Heart left ventricle (tissue), 16 donors: ENCODE measurements at regions of chr13 and their contacts with region 1.

Region 1: GRCh38 chr13:50421473-50422130 is 406.4 kb downstream of the KCNRG start:
- DNase-seq: no peak
- ATAC-seq: peak in 1 of 4 donors; percentile 26
- H3K4me3 ChIP-seq: no peak overlapping the region
- H3K27ac ChIP-seq: peak overlapping the region in 9 of 12 donors; percentile 13 to 77 (median 47)
- H3K4me1 ChIP-seq: peaks cover 0 to 60% (median 46%) of the 10 kb centered on the region in 12 donors
- H3K27me3 ChIP-seq: no peaks in the 10 kb centered on the region
- CTCF ChIP-seq: no peak
- POLR2A ChIP-seq: no peak

Region 2: GRCh38 chr13:50387051-50387581 is 34.5 kb before region 1 on chr13:
- intact Hi-C with region 1: loop called in 1 of 10 experiments (anchors 5 kb)
- DNase-seq: peak; percentile 61 to 77 (median 68)
- ATAC-seq: peak; percentile 89 to 96 (median 95)
- H3K4me3 ChIP-seq: peak overlapping the region in 10 of 12 donors; percentile 10 to 50 (median 37)
- H3K27ac ChIP-seq: peak overlapping the region in 11 of 12 donors; percentile 33 to 86 (median 69)
- H3K4me1 ChIP-seq: peaks cover 0 to 20% (median 2%) of the 10 kb centered on the region in 12 donors
- H3K27me3 ChIP-seq: no peaks in the 10 kb centered on the region
- CTCF ChIP-seq: peak in 11 of 12 donors; percentile 8 to 53 (median 23)
- POLR2A ChIP-seq: no peak

Region 3: GRCh38 chr13:50476577-50477285 is 55.1 kb after region 1 on chr13:
- intact Hi-C with region 1: loop called in 1 of 10 experiments (anchors 5 kb)
- DNase-seq: no peak
- ATAC-seq: peak; percentile 42 to 91 (median 62)
- H3K4me3 ChIP-seq: no peak overlapping the region
- H3K27ac ChIP-seq: peak overlapping the region in 5 of 12 donors; percentile 11 to 46 (median 37)
- H3K4me1 ChIP-seq: peaks cover 0 to 16% (median 7%) of the 10 kb centered on the region in 12 donors
- H3K27me3 ChIP-seq: no peaks in the 10 kb centered on the region
- CTCF ChIP-seq: no peak
- POLR2A ChIP-seq: no peak

Region 4: DNA sequence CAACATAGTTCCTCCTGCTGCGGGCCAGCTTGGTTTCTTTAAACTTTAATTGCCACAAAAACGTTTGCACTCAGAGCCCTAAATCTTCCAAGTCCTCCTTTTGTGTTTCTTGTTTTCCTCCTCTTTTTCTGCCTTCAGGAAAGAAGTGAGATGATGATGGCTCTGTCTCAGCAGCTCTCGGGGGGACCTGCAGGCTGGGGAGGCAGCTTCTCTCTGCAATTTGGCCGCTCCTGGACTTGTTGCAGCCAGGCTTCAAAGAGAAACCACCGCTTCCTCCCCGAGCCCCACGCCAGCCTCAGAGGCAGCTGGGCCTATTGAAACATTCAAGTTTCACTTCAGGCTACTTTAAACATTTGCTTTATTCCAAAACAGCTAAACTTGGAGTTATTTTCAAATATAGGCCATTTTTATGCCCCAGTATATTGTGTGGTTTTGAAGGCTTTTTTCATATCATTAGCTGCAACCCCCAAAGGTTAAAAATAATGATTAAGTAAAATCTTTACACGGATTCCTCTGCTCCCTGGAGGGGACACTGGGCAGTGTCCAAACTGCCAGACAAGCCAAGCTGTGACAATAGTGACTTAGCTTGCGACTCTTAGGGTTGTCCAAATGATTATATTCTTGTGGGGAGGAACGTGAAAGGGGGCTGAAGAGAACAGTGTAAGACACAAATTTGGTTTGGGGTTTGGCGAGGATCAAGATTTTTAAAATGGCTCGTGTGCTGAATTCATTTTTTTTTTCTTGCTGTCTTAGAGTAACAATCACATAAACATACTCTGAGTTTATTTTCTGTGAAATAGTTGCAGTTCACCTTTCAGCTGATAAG is 91.1 kb after region 1 on chr13:
- intact Hi-C with region 1: loop called in 1 of 10 experiments (anchors 5 kb)
- DNase-seq: peak; percentile 65 to 86 (median 73)
- ATAC-seq: peak; percentile 79 to 91 (median 86)
- H3K4me3 ChIP-seq: peak overlapping the region in 9 of 12 donors; percentile 11 to 45 (median 34)
- H3K27ac ChIP-seq: peak overlapping the region; percentile 33 to 90 (median 74)
- H3K4me1 ChIP-seq: peaks cover 0 to 36% (median 21%) of the 10 kb centered on the region in 12 donors
- H3K27me3 ChIP-seq: no peaks in the 10 kb centered on the region
- CTCF ChIP-seq: peak in 7 of 12 donors; percentile 6 to 38 (median 29)
- POLR2A ChIP-seq: no peak